MCF 10A (cell line): ENCODE measurements at regions of chr6 and their contacts with region 1.

Region 1: GRCh38 chr6:16761471-16762267 is 409 bp upstream of the ATXN1 start:
- DNase-seq: peak; percentile 83
- H3K4me3 Mint-ChIP-seq: peak overlapping the region; percentile 90
- H3K27ac Mint-ChIP-seq: peak overlapping the region; percentile 77
- H3K4me1 Mint-ChIP-seq: peaks cover 16% of the 10 kb centered on the region
- H3K27me3 Mint-ChIP-seq: no peaks in the 10 kb centered on the region
- CTCF ChIP-seq: peak; percentile 7

Region 2: DNA sequence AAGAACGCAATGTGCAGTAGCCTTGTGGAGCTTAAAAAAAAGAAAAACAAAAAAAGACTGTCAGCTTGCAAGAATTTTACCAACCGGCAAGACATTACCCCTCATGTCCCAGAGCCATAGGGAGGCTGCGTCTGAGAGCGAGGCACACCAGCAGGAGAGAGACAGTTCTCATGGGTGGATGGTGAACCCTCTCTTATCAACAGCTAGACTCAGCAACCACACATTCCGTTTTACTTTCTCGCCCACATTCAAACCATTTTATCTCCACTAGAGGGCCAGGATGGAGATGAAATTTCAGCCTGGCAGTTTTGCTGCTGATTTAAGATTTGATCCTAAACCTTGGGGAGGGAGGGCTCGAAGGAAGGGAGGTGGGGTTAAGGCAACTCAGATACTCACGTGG is 247.4 kb before region 1 on chr6:
- CTCF ChIA-PET with region 1: interaction called, 90 read pairs
- POLR2A ChIA-PET with region 1: interaction called, 12 read pairs
- intact Hi-C with region 1: loop called (anchors 1 kb)
- DNase-seq: peak; percentile 29
- H3K4me3 Mint-ChIP-seq: no peak overlapping the region
- H3K27ac Mint-ChIP-seq: no peak overlapping the region
- H3K4me1 Mint-ChIP-seq: peaks cover 10% of the 10 kb centered on the region
- H3K27me3 Mint-ChIP-seq: no peaks in the 10 kb centered on the region
- CTCF ChIP-seq: peak; percentile 20

Region 3: DNA sequence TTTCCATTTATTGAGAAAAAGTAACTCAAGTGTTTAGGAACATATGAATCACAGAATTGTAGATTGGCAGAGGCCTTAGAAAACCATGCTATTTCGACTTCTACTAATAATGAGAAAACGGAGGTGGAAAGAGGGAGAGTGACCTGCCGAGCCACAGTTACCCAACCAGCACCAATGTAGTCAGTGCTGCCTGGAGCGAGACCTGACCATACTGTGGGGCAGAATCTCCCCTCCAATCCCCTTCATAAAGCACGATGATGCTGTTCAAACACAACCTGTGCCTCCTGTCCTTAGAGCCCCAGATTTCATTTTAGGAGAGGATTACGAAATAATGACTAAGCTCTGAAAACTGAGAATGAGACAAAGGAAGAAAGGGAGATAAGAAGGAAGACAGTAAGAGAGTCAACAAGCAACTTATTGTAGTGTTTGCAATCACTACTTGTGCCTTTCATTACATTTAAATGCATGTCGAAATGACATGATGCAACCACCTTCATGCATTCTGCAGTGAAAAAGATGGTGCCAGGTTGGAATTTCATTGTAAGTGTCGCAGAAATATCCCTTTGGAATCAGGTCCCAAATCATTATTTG is 71.0 kb before region 1 on chr6:
- CTCF ChIA-PET with region 1: interaction called, 5 read pairs
- POLR2A ChIA-PET with region 1: interaction called, 15 read pairs
- intact Hi-C with region 1: no loop called
- DNase-seq: peak; percentile 64
- H3K4me3 Mint-ChIP-seq: no peak overlapping the region
- H3K27ac Mint-ChIP-seq: no peak overlapping the region
- H3K4me1 Mint-ChIP-seq: peaks cover 27% of the 10 kb centered on the region
- H3K27me3 Mint-ChIP-seq: no peaks in the 10 kb centered on the region
- CTCF ChIP-seq: no peak

Region 4: DNA sequence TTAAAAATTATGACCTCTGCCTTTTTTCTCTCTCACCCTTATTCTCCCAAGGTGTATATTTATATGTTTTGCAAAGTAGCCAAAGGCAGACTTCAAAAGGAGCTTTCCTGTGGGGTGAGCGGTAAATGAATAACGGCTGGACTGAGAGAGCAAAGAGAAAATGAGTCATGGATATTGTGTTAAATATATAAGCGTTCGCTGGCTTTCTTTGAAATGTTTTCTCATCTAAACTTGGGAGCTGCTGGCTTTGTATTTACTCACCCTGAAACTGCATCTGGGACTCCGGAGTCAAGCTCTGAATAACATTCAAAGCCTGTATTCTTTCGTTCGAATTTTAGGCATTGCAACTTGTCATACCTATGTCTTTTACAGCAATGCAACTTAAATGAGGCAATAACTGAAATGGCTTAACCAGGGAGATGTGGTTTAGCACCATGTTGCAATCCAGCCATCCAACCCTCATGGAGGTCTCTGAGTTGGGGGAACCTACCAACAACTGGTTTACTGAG is 32.4 kb before region 1 on chr6:
- CTCF ChIA-PET with region 1: interaction called, 30 read pairs
- POLR2A ChIA-PET with region 1: interaction called, 80 read pairs
- intact Hi-C with region 1: loop called (anchors 5 kb)
- DNase-seq: peak; percentile 59
- H3K4me3 Mint-ChIP-seq: no peak overlapping the region
- H3K27ac Mint-ChIP-seq: peak overlapping the region; percentile 71
- H3K4me1 Mint-ChIP-seq: peaks cover 26% of the 10 kb centered on the region
- H3K27me3 Mint-ChIP-seq: no peaks in the 10 kb centered on the region
- CTCF ChIP-seq: no peak

Region 5: DNA sequence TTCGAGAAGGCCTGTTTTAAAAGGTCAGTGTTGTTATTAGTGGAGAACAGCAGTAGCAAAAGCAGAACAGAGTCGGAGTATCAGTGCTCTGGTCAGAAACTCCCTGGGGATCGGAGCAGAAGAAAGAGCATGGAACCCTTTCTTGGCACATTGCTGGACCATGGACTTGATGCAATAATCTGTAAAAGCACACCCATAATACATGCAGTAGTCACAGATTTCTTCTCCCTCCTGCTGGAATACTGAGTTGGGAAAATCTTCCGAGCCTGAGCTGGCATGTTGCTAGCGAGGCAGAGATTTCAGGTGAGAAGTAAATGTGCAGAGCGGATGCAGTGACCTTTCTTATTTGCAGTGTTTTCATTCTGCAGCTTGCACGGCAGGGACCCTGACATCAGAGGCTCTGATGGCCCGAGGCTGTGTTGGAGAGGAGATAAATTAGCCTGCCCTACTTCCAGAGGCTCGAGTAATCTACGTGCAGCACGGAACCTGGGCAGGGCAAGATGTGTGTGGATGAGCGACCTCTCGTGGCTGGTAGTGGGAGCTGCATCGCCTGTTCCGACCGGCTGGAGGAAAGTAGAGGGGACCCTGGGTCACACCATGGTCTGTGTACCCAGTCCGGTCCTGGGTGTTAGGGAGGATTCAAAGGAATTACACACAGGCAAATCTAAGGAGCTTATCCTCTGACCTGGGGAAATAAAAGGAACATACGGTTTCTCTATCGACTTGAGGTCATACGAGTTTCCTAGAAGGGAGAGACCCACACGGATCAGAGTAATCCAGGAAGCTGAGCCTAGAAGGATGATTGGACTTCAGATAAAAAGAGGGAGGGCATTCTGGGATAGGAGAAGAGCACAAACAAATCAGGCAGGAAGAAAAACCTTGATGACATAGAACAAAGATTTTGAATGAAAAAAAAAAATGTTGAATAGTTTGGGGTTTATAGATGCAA is 203.2 kb after region 1 on chr6:
- CTCF ChIA-PET with region 1: interaction called, 45 read pairs
- POLR2A ChIA-PET with region 1: interaction called, 10 read pairs
- intact Hi-C with region 1: loop called (anchors 1 kb)
- DNase-seq: peak; percentile 75
- H3K4me3 Mint-ChIP-seq: no peak overlapping the region
- H3K27ac Mint-ChIP-seq: peak overlapping the region; percentile 3
- H3K4me1 Mint-ChIP-seq: peaks cover 5% of the 10 kb centered on the region
- H3K27me3 Mint-ChIP-seq: peaks cover 6% of the 10 kb centered on the region
- CTCF ChIP-seq: peak; percentile 87

Region 6: DNA sequence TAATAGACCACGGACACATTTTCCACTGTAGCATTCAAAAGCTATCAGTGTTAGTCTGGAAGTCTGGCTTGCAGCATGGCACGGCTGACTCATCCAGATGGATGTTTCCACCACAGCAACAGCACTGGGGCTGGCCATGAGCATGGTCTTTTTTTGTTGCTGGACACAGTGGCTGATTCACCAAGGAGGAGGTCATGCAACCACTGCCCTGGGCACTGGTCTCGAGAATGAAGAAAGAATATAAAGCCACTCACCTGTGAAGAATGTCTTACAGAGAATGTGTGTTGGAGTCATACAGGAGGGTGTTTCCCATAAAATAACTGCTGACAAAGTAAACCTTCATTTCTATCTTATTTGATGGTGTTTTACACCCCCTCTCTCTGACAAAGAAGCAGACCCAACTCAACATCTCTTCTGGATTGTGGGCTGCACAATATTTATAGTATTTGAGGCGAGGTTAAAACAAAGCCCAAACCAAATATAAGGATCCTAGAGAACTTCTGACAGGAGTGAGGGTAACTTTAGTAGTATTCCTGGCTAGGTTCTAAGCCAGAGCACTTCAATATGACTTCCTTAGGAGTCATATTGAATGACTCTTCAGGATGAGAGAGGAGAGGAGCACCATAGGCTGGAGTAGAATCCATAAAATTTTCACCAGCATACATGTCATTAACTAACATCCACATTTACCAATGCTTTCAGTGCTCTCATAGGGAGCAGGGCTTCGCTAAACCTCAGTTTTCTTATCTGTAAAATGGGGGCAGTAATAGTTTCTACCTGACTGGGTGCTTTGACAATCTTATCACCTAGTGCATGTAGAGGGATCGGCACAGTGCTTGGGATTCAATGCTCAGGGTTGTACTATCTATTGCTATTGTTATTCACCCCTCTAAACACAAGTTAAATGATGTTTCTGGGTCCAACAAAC is 1104.4 kb after region 1 on chr6:
- CTCF ChIA-PET with region 1: no interaction called
- POLR2A ChIA-PET with region 1: no interaction called
- intact Hi-C with region 1: no loop called
- DNase-seq: peak; percentile 98
- H3K4me3 Mint-ChIP-seq: peak overlapping the region; percentile 33
- H3K27ac Mint-ChIP-seq: peak overlapping the region; percentile 94
- H3K4me1 Mint-ChIP-seq: peaks cover 53% of the 10 kb centered on the region
- H3K27me3 Mint-ChIP-seq: no peaks in the 10 kb centered on the region
- CTCF ChIP-seq: no peak